SK-N-SH (cell line): ENCODE measurements at regions of chr1 and their contacts with region 1.

Region 1: GRCh38 chr1:110780600-110781484 is 92.1 kb upstream of the CD53 start:
- DNase-seq: peak; percentile 69
- H3K4me3 ChIP-seq: no peak overlapping the region; a peak in 1 of 4 replicates
- H3K27ac ChIP-seq: no peak overlapping the region
- H3K4me1 ChIP-seq: no peaks in the 10 kb centered on the region; a peak in 1 of 4 replicates
- H3K27me3 ChIP-seq: no peaks in the 10 kb centered on the region; the same call in 1 of the 2 replicates
- CTCF ChIP-seq: peak; percentile 75
- EP300 ChIP-seq: no peak
- RAD21 ChIP-seq: peak; percentile 79

Region 2: GRCh38 chr1:110605901-110606656 is 174.8 kb before region 1 on chr1 and contains the start of gene KCNA2:
- CTCF ChIA-PET with region 1: interaction called, 50 read pairs
- POLR2A ChIA-PET with region 1: no interaction called
- DNase-seq: peak; percentile 88
- H3K4me3 ChIP-seq: peak within 1 kb of the TSS; percentile 43 to 56
- H3K27ac ChIP-seq: no peak within 1 kb of the TSS
- H3K4me1 ChIP-seq: peaks cover 0 to 10% of the 10 kb centered on the region in 2 experiments; a peak in 2 of 4 replicates
- H3K27me3 ChIP-seq: peaks cover 60% of the 10 kb centered on the region
- CTCF ChIP-seq: no peak
- EP300 ChIP-seq: no peak
- RAD21 ChIP-seq: no peak
- polyA plus RNA-seq, gene KCNA2: not detected in 2 replicates

Region 3: GRCh38 chr1:110749960-110750359 is 30.9 kb before region 1 on chr1:
- CTCF ChIA-PET with region 1: interaction called, 14 read pairs
- POLR2A ChIA-PET with region 1: no interaction called
- DNase-seq: no peak
- H3K4me3 ChIP-seq: no peak overlapping the region
- H3K27ac ChIP-seq: no peak overlapping the region
- H3K4me1 ChIP-seq: no peaks in the 10 kb centered on the region
- H3K27me3 ChIP-seq: no peaks in the 10 kb centered on the region
- CTCF ChIP-seq: no peak
- EP300 ChIP-seq: no peak
- RAD21 ChIP-seq: no peak

Region 4: GRCh38 chr1:110798691-110799256 is 17.9 kb after region 1 on chr1:
- CTCF ChIA-PET with region 1: interaction called, 49 read pairs
- POLR2A ChIA-PET with region 1: no interaction called
- DNase-seq: no peak
- H3K4me3 ChIP-seq: no peak overlapping the region
- H3K27ac ChIP-seq: no peak overlapping the region
- H3K4me1 ChIP-seq: no peaks in the 10 kb centered on the region; a peak in 1 of 4 replicates
- H3K27me3 ChIP-seq: no peaks in the 10 kb centered on the region
- CTCF ChIP-seq: no peak
- EP300 ChIP-seq: no peak
- RAD21 ChIP-seq: no peak